ENCODE measurements at regions of chr4 and their contacts with region 1.

Region 1: DNA sequence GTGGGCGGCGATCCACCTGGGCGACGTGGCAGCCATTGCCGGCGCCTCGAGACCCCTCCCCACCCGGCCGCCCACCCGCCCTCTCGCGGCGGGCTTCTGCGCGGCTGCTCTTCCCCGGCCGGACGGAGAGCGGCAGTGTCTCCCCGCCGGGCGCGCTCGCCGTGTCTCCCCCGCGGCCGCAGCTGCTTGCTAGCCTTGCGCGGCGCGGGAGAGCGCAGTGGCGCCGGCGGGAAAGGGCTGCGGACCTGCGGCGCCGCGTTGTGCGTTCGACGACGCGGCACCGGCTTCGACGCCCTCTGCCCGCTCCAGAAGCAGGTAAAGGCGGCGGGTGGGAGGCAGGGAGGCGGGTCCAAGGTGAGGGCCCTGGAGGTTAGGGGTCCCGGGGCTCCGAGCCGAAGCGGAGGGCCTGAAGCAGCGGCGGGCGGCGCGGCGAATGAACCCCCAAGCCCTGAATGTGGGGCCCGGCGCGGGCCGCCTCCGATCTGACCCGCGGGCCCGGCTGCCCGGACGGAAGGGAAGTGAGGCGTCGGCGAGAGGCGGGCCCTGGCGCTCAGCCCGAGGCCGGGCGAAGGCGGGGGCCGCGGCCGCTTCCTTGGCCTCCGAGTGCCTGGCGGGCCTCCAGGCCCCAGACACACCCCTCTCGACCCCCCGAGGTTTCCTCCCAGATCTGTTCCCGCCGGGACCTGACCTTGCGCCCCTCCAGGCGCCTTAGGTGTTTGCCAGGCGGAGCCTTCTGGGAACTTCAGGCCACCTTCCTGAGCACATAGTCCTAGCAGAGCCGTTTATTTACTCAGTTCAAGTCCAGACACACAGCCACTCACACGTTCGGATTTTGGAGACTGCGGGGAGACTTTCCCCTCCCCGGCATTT is at the start of gene N4BP2:
- DNase-seq: peak; percentile 40 to 97 (median 70)

Region 2: DNA sequence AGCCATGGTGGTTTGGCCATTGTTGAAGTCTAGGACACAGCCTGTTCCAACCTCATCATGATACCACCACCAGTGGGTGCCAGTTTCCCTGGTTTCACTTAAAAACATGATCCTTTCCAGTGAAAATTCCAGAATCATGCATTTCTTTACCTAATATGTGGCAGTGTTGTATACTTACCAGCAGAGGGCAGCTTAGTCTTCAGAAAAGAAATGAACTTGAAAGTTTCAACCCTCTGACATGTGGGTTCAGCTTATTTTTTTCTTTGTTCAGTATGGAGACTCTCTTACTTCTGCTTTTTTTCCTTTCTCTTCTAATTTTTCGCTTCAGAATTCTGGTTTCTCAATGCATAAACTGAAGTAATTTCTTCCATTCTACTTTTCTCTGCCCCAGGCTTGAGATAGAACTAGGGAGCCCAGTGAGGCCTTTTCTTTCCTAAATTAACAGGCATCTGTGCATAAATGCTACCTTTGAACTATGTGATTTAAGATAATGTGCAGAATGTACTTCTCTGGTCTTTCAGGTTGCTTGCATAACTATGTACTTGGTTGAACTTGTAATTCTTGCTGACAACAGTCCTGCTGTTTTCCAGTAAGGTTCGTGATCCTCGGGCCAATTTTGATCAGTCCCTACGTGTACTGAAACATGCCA is 587.4 kb before region 1 on chr4:
- intact Hi-C with region 1: loop called (anchors 5 kb)
- DNase-seq: peak in 1 of 10 donors; percentile 16

Region 3: GRCh38 chr4:39527273-39528060 is 529.5 kb before region 1 on chr4 and contains the start of gene UGDH:
- intact Hi-C with region 1: loop called (anchors 5 kb)
- DNase-seq: peak; percentile 91 to 100 (median 97)

Region 4: GRCh38 chr4:39697740-39698423 is 359.1 kb before region 1 on chr4 and contains the start of gene UBE2K:
- intact Hi-C with region 1: loop called (anchors 5 kb)
- DNase-seq: peak; percentile 71 to 97 (median 80)

Region 5: GRCh38 chr4:39977489-39978377 is 79.2 kb before region 1 on chr4 and contains the start of gene PDS5A:
- intact Hi-C with region 1: loop called (anchors 5 kb)
- DNase-seq: peak; percentile 75 to 98 (median 82)

Region 6: DNA sequence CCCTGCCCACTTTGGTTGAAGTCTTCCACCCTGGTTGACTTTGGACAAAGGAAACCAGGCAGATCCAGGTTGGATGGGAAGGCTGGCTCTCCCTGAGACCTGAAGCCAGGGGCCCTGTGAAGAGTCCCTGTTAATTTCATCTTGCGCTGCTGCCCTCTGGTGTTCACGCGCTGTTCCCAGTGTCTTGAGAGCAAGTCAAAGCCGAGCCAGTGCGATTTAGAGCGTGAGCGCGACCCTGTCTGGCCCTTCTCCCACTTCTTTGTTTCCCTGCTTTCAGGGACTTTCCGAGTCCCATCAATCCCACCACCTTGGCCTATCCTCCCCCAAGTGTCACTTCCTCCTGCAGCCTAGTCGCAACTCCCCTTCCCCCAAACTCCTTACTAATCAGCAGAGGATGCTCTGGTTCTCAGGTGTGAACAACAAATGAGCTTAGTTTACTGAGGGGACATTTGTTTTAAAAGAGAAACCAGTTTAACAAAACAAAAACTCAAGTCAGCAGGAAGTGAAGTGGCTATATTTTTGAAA is 252.4 kb after region 1 on chr4:
- intact Hi-C with region 1: loop called (anchors 1 kb)
- DNase-seq: peak; percentile 72 to 98 (median 88)

Measured in posterior cingulate gyrus (tissue), 11 donors.